ENCODE measurements at regions of chr3 and their contacts with region 1.

Region 1: DNA sequence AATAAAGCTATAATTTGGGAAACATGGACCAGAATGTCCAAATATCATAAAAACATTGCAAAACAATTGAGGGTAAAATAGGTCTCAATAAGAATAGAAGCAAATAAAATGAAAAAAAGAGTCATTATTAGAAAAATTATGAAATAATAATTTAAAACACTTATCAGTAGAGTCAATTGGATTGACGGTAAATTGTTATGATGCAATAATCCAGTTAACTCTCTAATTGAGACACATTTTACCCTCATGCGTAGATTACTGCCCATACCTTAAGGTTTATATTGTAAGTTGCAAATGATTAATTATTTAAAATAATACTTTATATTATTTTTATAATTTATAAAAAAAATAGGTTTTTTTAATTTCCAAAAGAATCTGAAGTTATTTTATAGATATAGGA is 73.4 kb upstream of the POU1F1 start:
- DNase-seq: no peak
- H3K4me3 ChIP-seq: no peak overlapping the region
- CTCF ChIP-seq: no peak
- POLR2A ChIP-seq: no peak

Region 2: GRCh38 chr3:85539232-85539631 is 1810.6 kb before region 1 on chr3:
- intact Hi-C with region 1: no loop called
- DNase-seq: no peak
- H3K4me3 ChIP-seq: no peak overlapping the region
- CTCF ChIP-seq: no peak
- POLR2A ChIP-seq: no peak

Region 3: DNA sequence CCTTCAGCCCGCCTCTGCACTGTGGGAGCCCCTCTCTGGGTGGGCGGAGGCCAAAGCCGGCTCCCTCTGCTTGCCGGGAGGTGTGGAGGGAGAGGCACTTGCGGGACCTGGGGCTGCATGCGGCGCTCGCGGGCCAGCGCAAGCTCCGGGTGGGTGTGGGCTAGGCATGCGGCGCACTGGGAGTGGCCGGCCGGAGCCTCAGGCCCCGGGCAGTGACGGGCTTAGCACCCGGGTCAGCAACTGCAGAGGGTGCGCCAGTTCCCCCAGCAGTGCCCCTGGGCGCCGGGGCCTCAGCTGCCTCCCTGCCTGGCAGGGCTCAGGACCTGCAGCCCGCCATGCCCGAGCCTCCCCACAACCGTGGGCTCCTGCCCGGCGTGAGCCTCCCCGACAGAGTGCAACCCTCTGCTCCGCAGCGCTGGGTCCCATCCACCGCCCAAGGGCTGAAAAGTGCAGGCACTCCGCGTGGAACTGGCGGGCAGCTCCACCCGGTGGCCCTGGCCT is 25.4 kb after region 1 on chr3:
- intact Hi-C with region 1: no loop called
- DNase-seq: peak in 1 of 2 donors; percentile 80
- H3K4me3 ChIP-seq: no peak overlapping the region
- CTCF ChIP-seq: no peak
- POLR2A ChIP-seq: no peak

Region 4: GRCh38 chr3:88003115-88003755 is 653.4 kb after region 1 on chr3:
- intact Hi-C with region 1: loop called (anchors 10 kb)
- DNase-seq: no peak
- H3K4me3 ChIP-seq: no peak overlapping the region
- CTCF ChIP-seq: peak in 1 of 3 donors; percentile 34
- POLR2A ChIP-seq: no peak